ENCODE measurements at regions of chr10 and their contacts with region 1.

Region 1: GRCh38 chr10:31031558-31032257 is at the start of gene ZNF438:
- DNase-seq: peak; percentile 68
- ATAC-seq: peak; percentile 90
- H3K4me3 ChIP-seq: peak within 1 kb of the TSS; percentile 75
- H3K27ac ChIP-seq: peak within 1 kb of the TSS; percentile 97
- H3K4me1 ChIP-seq: peaks cover 2% of the 10 kb centered on the region; the same call in 1 of the 2 replicates
- H3K27me3 ChIP-seq: no peaks in the 10 kb centered on the region
- CTCF ChIP-seq: peak; percentile 69 to 80 (median 71)
- EP300 ChIP-seq: peak in 1 of 2 experiments; percentile 64; a peak in 1 of 4 replicates
- POLR2A ChIP-seq: peak; percentile 79
- RAD21 ChIP-seq: peak; percentile 39; the same call in 1 of the 2 replicates
- polyA plus RNA-seq, gene ZNF438: 0.93 to 0.99 TPM

Region 2: GRCh38 chr10:31004611-31005193 is 27.0 kb before region 1 on chr10:
- CTCF ChIA-PET with region 1: interaction called, 11 read pairs
- POLR2A ChIA-PET with region 1: interaction called, 20 read pairs
- RAD21 ChIA-PET with region 1: interaction called, 20 read pairs
- SMC1A ChIA-PET with region 1: interaction called, 38 read pairs
- in situ Hi-C with region 1: no loop called
- intact Hi-C with region 1: no loop called
- DNase-seq: no peak
- ATAC-seq: peak; percentile 43
- H3K4me3 ChIP-seq: no peak overlapping the region
- H3K27ac ChIP-seq: no peak overlapping the region
- H3K4me1 ChIP-seq: peaks cover 5% of the 10 kb centered on the region
- H3K27me3 ChIP-seq: no peaks in the 10 kb centered on the region
- CTCF ChIP-seq: no peak
- EP300 ChIP-seq: peak in 1 of 2 experiments; percentile 72; a peak in 1 of 4 replicates
- POLR2A ChIP-seq: no peak
- RAD21 ChIP-seq: no peak

Region 3: DNA sequence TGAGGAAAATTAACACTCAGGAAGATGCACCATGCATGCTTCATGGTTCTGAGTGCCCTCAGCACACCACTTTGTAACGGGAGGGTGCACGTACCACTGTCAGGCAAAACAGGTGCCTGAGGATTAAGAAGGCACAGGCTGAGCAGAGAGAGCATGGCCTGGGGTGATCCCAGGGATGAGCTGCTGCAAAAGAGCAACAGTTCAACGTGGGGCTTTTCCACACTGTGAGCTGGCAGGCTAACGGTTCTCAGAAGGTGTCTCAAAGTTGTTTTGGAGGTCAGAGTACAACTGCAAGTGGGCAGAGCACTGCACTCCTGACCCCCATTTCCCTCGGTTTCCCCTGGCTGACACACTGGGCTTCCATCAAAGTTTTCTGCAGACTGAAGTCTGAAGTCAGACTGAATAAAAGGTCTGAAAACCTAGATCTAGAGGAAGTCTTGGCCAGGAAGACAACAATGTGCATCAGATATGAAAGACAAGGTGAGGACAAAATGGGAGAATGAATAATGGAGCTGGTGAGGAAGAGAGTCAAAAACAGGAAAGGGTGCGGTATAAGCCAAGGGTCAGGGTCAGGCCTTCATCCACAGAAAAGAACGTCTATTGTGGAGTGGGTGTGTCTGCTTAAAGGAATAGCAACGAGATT is 20.6 kb before region 1 on chr10:
- CTCF ChIA-PET with region 1: interaction called, 11 read pairs
- POLR2A ChIA-PET with region 1: interaction called, 20 read pairs
- RAD21 ChIA-PET with region 1: interaction called, 20 read pairs
- SMC1A ChIA-PET with region 1: interaction called, 38 read pairs
- in situ Hi-C with region 1: no loop called
- intact Hi-C with region 1: no loop called
- DNase-seq: no peak
- ATAC-seq: no peak
- H3K4me3 ChIP-seq: no peak overlapping the region
- H3K27ac ChIP-seq: no peak overlapping the region
- H3K4me1 ChIP-seq: peaks cover 5% of the 10 kb centered on the region
- H3K27me3 ChIP-seq: no peaks in the 10 kb centered on the region
- CTCF ChIP-seq: no peak
- EP300 ChIP-seq: no peak
- POLR2A ChIP-seq: no peak
- RAD21 ChIP-seq: no peak

Region 4: DNA sequence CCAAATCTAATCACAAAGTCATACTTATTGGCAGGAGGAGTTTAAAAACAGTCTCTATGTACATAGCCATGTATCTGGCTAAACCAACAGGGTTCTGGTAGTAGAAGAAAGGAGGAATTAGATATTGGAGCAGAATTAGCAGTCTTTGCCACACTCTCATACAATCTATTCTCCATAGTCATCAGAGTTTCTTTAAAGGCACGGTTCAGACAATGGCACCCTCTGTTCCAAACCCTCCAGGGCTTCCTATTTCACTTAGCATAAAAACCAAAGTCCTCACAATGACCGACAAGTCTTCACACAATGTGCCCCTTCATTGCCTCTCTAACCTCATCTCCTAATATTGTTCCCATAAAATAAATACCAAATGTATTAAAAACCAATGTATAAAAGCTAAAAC is 12.7 kb before region 1 on chr10:
- CTCF ChIA-PET with region 1: interaction called, 10 read pairs
- POLR2A ChIA-PET with region 1: interaction called, 3 read pairs
- RAD21 ChIA-PET with region 1: no interaction called
- SMC1A ChIA-PET with region 1: interaction called, 5 read pairs
- in situ Hi-C with region 1: no loop called
- intact Hi-C with region 1: no loop called
- DNase-seq: no peak
- ATAC-seq: no peak
- H3K4me3 ChIP-seq: no peak overlapping the region
- H3K27ac ChIP-seq: no peak overlapping the region
- H3K4me1 ChIP-seq: peaks cover 7% of the 10 kb centered on the region; the same call in 1 of the 2 replicates
- H3K27me3 ChIP-seq: no peaks in the 10 kb centered on the region
- CTCF ChIP-seq: no peak
- EP300 ChIP-seq: no peak
- POLR2A ChIP-seq: no peak
- RAD21 ChIP-seq: no peak

Region 5: GRCh38 chr10:31101123-31101522 is 69.4 kb after region 1 on chr10:
- CTCF ChIA-PET with region 1: interaction called, 4 read pairs
- POLR2A ChIA-PET with region 1: interaction called, 3 read pairs
- RAD21 ChIA-PET with region 1: interaction called, 11 read pairs
- SMC1A ChIA-PET with region 1: interaction called, 4 read pairs
- in situ Hi-C with region 1: no loop called
- intact Hi-C with region 1: no loop called
- DNase-seq: peak; percentile 59
- ATAC-seq: peak; percentile 91
- H3K4me3 ChIP-seq: no peak overlapping the region
- H3K27ac ChIP-seq: no peak overlapping the region; the same call in 1 of the 2 replicates
- H3K4me1 ChIP-seq: peaks cover 14% of the 10 kb centered on the region
- H3K27me3 ChIP-seq: no peaks in the 10 kb centered on the region
- CTCF ChIP-seq: no peak
- EP300 ChIP-seq: peak; percentile 52 to 80; a peak in 3 of 4 replicates
- POLR2A ChIP-seq: no peak
- RAD21 ChIP-seq: no peak

Region 6: DNA sequence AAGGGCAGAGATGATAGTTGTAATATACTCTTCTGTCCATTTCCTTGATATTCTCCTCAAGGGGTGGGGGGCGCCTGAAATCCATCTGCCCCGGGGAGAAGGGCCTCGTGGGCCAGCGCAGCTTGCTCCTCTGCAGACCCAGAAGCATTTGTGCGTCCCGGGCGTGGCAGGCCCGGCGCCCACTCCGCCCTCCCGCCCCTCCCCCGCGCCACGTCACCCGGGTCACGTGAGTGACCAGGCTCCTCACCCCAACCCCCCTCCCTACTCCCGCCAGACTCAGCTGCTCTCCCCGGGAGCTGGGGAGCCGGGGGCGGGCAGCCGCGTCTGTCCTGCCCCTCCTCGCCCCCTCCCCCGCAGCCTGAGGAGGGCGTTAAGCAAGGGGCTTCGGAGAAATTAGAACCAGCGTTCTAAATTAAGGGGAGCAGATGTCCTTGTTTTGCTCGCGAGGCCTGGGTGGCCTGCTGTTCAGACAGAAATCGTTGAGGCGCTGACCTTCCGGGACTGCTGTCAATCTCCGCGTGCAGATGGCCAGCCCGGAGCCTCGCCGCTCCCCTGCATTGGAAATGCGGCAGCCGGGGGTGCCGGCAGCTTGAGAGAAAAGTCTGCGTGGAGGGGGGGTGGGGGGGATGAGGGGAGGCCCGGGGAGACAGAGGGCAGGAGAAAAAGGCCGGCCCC is 102.1 kb after region 1 on chr10:
- CTCF ChIA-PET with region 1: no interaction called
- POLR2A ChIA-PET with region 1: interaction called, 5 read pairs
- RAD21 ChIA-PET with region 1: interaction called, 7 read pairs
- SMC1A ChIA-PET with region 1: interaction called, 3 read pairs
- in situ Hi-C with region 1: no loop called
- intact Hi-C with region 1: loop called (anchors 10 kb)
- DNase-seq: peak; percentile 26
- ATAC-seq: peak; percentile 84
- H3K4me3 ChIP-seq: peak overlapping the region; percentile 69; the same call in 1 of the 2 replicates
- H3K27ac ChIP-seq: peak overlapping the region; percentile 71
- H3K4me1 ChIP-seq: peaks cover 11% of the 10 kb centered on the region
- H3K27me3 ChIP-seq: no peaks in the 10 kb centered on the region
- CTCF ChIP-seq: no peak
- EP300 ChIP-seq: peak in 1 of 2 experiments; percentile 34; a peak in 1 of 4 replicates
- POLR2A ChIP-seq: peak; percentile 77
- RAD21 ChIP-seq: no peak

Region 7: GRCh38 chr10:31146491-31147209 is 114.9 kb after region 1 on chr10:
- CTCF ChIA-PET with region 1: no interaction called
- POLR2A ChIA-PET with region 1: no interaction called
- RAD21 ChIA-PET with region 1: no interaction called
- SMC1A ChIA-PET with region 1: no interaction called
- in situ Hi-C with region 1: no loop called
- intact Hi-C with region 1: no loop called
- DNase-seq: no peak
- ATAC-seq: no peak
- H3K4me3 ChIP-seq: no peak overlapping the region
- H3K27ac ChIP-seq: no peak overlapping the region
- H3K4me1 ChIP-seq: peaks cover 4% of the 10 kb centered on the region; the same call in 1 of the 2 replicates
- H3K27me3 ChIP-seq: no peaks in the 10 kb centered on the region
- CTCF ChIP-seq: no peak
- EP300 ChIP-seq: no peak
- POLR2A ChIP-seq: no peak
- RAD21 ChIP-seq: no peak